Spleen (tissue), 13 donors: ENCODE measurements at regions of chr6 and their contacts with region 1.

Region 1: DNA sequence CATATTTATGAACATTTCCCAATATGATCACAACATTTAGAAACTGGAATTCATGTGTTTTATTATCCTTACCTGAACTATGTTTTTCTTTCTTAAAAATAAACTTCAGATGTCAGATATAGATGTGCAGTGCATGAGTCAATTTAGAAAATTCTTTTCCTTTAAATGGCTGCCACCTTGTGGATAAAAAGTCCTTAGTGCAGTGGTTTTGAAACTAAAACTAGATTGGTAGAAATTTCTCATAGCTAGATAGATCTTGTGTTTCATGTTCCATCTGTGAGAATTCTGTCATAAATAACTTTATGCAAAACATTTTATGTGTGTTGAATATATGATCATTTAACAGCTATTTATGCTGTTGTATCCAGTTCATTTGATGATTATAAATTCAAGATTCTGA is 134.9 kb downstream of the KLHL32 start:
- DNase-seq: no peak
- H3K4me3 ChIP-seq: no peak overlapping the region
- H3K27ac ChIP-seq: no peak overlapping the region
- H3K4me1 ChIP-seq: no peaks in the 10 kb centered on the region
- H3K27me3 ChIP-seq: peaks cover 0 to 5% (median 0%) of the 10 kb centered on the region in 7 donors
- CTCF ChIP-seq: peak in 10 of 11 experiments; percentile 16 to 72 (median 58)
- POLR2A ChIP-seq: no peak

Region 2: DNA sequence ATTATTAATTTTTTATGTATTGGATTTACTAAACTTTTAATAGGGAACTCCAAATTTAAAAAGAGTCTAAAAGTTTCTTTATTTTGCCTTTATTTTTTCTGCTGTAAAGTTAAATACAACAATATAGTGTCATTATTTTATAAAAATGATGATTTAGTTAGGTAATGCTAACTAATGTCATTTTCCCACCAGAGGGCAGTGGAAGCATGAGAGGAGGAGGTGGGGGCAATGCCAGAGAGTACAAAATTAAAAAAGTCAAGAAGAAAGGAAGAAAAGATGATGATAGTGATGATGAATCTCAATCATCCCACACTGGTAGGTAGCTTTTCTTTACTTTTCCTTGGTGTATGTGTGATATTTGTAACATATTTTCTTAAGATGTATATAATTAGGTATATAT is 516.8 kb before region 1 on chr6:
- intact Hi-C with region 1: loop called (anchors 10 kb)
- DNase-seq: no peak
- H3K4me3 ChIP-seq: no peak overlapping the region
- H3K27ac ChIP-seq: no peak overlapping the region
- H3K4me1 ChIP-seq: no peaks in the 10 kb centered on the region
- H3K27me3 ChIP-seq: no peaks in the 10 kb centered on the region
- CTCF ChIP-seq: peak in 4 of 11 experiments; percentile 9 to 29 (median 16)
- POLR2A ChIP-seq: no peak